ENCODE measurements at regions of chr1 and their contacts with region 1.

Region 1: GRCh38 chr1:6624710-6625583 is at the start of gene THAP3:
- H3K4me3 Mint-ChIP-seq: peak within 1 kb of the TSS; percentile 85
- H3K27ac Mint-ChIP-seq: peak within 1 kb of the TSS; percentile 81
- H3K4me1 Mint-ChIP-seq: peaks cover 40% of the 10 kb centered on the region
- H3K27me3 Mint-ChIP-seq: no peaks in the 10 kb centered on the region

Region 2: DNA sequence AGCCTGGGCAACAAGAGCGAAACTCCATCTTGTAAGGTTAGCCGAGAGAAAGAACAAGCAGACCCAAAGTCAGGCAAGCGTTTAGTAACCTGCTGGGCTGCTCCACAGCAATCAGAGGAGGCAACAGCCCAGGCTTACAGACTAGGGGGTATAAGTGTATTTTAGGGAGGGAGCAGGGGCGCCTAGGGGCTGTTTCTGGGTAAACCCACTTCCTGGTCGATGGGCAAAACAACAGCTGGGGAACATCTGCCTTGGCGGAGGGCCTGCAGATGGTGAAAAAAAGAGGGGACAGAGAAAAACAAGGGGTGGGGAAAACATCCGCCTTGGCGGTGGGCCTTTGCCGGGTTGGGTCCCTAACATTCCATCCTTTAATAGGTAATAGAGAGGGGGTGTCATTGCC is 64.7 kb before region 1 on chr1:
- intact Hi-C with region 1: no loop called
- H3K4me3 Mint-ChIP-seq: no peak overlapping the region
- H3K27ac Mint-ChIP-seq: no peak overlapping the region
- H3K4me1 Mint-ChIP-seq: no peaks in the 10 kb centered on the region
- H3K27me3 Mint-ChIP-seq: peaks cover 9% of the 10 kb centered on the region

Region 3: GRCh38 chr1:6579374-6580118 is 45.4 kb before region 1 on chr1 and contains the start of gene ZBTB48:
- intact Hi-C with region 1: loop called (anchors 2 kb)
- H3K4me3 Mint-ChIP-seq: peak within 1 kb of the TSS; percentile 100
- H3K27ac Mint-ChIP-seq: peak within 1 kb of the TSS; percentile 100
- H3K4me1 Mint-ChIP-seq: peaks cover 45% of the 10 kb centered on the region
- H3K27me3 Mint-ChIP-seq: no peaks in the 10 kb centered on the region

Region 4: GRCh38 chr1:7042322-7043190 is 417.6 kb after region 1 on chr1:
- intact Hi-C with region 1: no loop called
- H3K4me3 Mint-ChIP-seq: no peak overlapping the region
- H3K27ac Mint-ChIP-seq: no peak overlapping the region
- H3K4me1 Mint-ChIP-seq: no peaks in the 10 kb centered on the region
- H3K27me3 Mint-ChIP-seq: peaks cover 4% of the 10 kb centered on the region